ENCODE measurements at regions of chr12 and their contacts with region 1.

Region 1: DNA sequence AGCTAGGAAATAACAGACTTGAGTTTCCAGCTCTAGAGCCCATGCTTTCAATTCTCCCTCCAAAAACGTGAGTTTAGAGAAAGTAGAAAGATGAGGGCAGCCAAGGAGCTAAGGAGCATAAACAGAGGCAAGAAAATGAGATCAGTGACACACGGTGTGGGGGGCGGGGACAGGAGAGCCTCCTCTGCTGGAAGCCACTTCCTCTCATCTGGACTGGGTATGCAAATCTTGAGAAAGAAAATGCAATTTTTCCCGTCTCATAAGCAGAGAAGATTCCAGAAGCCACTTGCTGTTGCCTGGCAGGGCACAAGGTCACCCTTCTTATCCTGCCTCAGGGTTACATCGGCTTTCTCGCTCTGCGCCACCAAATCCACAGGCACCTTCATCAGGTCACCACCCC is 6.0 kb downstream of the OR10P1 start:
- DNase-seq: peak; percentile 61
- ATAC-seq: no peak
- H3K4me3 Mint-ChIP-seq: no peak overlapping the region
- H3K27ac Mint-ChIP-seq: no peak overlapping the region
- H3K4me1 Mint-ChIP-seq: peaks cover 31% of the 10 kb centered on the region
- H3K27me3 Mint-ChIP-seq: no peaks in the 10 kb centered on the region

Region 2: DNA sequence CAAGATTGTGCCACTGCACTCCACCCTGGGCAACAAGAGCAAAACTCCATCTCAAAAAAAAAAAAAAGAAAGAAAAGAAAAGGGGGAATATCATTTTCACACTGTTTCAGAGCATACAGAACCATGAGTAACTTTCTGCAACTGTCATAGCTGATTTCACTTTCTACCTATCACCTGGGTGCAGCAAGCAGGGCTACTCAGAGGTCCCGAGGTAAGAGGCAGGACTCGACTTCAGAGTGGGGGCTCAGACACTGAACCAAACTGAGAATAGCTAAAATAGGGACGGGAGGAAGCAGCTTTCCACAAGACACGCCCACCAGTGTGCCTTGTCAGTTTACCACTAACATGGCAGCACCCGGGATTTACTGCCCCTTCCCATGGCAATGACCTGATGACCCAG is 23.9 kb after region 1 on chr12:
- CTCF ChIA-PET with region 1: interaction called, 13 read pairs
- DNase-seq: no peak
- ATAC-seq: no peak
- H3K4me3 Mint-ChIP-seq: no peak overlapping the region
- H3K27ac Mint-ChIP-seq: no peak overlapping the region
- H3K4me1 Mint-ChIP-seq: peaks cover 5% of the 10 kb centered on the region
- H3K27me3 Mint-ChIP-seq: peaks cover 12% of the 10 kb centered on the region